Right ventricle myocardium inferior (tissue), 1 donor: ENCODE measurements at regions of chr1 and their contacts with region 1.

Region 1: GRCh38 chr1:239898062-239898730 is 193.5 kb upstream of the FMN2 start:
- DNase-seq: peak; percentile 82
- ATAC-seq: peak; percentile 78

Region 2: DNA sequence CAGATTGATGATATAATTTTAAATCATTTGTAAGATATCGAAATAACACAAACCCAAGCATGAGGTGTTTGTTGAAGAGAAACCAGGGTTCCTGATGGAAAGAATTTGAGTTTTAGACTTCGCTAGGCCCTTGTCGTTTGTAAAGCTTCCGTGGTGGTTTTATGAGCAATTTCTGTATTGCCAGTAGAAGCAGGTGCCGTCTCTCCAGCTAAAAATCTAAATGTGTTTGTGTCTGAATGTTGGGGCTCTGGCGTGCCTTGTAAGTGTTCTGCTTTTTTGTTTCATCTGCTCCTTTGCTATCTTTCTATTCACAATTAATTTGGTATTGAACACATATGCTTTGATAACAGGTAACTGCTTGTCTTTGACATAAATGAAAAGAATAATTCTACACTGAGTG is 484.3 kb before region 1 on chr1:
- intact Hi-C with region 1: loop called (anchors 5 kb)
- DNase-seq: no peak
- ATAC-seq: no peak

Region 3: DNA sequence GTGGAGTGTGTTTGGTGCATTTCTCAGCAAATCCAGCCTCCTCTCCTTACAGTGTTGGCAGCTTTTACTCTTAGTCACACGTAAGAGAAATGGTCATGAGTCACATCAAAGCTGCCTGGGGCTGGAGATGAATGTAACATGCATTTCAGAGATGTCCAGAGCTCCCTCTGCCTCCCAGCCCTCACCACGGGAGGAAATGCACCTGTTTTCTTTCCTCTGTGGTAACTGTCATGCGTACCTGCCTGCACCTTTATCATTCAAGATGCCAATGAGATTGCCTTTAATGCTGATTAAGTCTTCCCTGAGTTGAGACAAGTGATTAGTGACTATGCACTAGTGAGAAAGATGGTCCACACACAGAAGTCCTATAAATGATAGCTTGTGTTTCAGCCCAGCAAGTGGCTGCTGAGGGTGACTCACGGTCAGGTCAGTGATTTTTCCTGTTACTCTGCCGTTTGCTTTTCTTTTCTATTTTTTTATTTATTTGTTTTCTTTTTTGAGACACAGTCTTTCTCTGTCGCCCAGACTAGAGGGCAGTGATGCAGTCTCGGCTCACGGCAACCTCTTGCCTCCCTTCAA is 83.8 kb before region 1 on chr1:
- intact Hi-C with region 1: no loop called
- DNase-seq: no peak
- ATAC-seq: no peak